ENCODE measurements at regions of chr12 and their contacts with region 1.

Region 1: DNA sequence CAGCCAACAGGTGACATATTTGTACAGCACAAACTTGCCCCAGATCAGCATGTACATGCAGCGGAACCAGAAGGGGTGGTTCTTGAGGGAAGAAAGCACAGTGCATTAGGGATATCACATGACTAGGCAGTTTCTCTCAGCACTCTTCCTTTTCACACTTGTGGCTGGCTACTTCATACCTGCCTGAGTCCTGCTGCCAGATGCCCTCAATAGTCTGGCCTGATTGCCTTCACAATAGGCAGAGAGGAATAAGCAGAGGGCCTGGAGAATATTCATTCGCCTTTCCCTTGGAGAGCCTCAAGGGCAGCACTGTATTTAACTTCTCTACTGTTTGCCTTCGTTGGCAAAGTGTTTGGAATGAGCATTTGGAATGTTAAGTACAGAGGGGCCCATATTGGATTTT is 7.9 kb downstream of the EMG1 start:
- DNase-seq: no peak
- ATAC-seq: no peak
- H3K4me3 Mint-ChIP-seq: no peak overlapping the region
- H3K27ac Mint-ChIP-seq: no peak overlapping the region
- H3K4me1 Mint-ChIP-seq: peaks cover 22% of the 10 kb centered on the region
- H3K27me3 Mint-ChIP-seq: no peaks in the 10 kb centered on the region

Region 2: DNA sequence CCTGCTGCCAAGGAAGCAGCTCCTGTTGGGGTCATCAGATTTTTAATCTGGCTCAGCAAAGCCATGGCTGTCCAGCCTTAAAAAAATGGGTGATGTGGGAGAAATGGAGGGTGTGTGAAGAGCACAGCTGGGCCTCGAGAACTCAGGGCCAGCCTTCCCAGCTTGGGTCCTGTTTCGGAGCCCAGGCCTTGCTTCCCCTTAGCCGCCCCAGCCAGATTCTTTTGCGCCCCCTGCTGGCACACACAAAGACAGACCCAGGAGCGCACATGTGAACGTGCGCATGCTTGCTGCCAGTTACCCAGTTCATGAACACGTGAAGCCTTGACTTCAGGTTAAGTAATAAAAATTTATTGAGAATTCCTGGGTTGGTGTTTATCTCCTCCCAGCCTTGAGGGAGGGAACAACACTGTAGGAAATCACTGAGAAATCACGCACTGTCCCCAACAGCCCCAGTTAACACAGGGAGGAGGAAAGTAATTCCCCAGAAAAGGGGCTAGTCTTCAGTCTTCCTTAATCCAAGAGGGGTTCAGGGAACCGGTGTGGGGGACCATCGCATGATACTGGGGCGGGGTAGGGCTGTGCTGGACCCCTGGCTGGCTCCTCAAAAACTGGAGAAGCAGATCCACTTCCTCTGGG is 13.5 kb before region 1 on chr12:
- CTCF ChIA-PET with region 1: interaction called, 23 read pairs
- POLR2A ChIA-PET with region 1: interaction called, 3 read pairs
- DNase-seq: peak; percentile 93
- ATAC-seq: peak; percentile 65
- H3K4me3 Mint-ChIP-seq: peak overlapping the region; percentile 12
- H3K27ac Mint-ChIP-seq: peak overlapping the region; percentile 77
- H3K4me1 Mint-ChIP-seq: peaks cover 75% of the 10 kb centered on the region
- H3K27me3 Mint-ChIP-seq: no peaks in the 10 kb centered on the region